Activated B cell treated with CpG ODN at 0.5 μM for 24 hours (primary cell): ENCODE measurements at regions of chr11 and their contacts with region 1.

Region 1: DNA sequence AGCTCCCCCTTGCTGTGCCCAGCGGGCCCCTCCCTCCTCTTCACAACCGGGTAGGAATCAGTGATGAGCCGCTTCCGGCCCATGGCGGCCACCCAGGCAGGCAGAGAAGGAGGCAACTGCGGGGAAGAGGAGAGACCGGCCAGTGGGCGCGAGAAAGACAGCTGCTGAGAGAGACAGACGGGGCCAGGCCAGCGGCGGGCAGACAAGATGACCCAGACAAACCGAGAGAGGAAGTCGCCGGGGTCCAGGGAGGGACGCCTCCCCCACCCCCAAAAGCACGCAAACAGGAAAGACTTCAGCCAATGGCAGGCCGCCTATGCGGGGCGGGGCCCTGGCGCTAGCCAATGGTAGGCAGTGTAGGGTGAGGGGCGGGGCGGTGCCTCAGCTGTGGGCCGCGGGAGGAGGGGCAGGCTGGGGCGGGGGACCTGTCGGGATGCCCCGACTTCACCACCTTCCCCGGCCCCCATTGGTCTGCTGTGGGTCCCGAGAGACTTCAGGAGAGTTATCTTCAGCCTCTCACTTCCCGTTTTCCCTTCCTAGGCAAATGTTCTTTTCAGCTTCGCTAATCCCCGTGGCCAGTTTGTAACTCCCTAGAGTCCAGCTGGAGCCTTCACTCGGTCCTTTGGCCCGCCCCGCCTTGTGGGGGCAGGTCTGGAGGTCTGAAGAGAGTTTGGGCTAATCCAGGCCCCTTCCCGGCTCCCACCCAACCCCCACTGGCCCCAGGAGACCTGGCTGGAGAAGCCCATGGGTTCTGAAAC is at the start of gene POLD4:
- DNase-seq: peak; percentile 98
- ATAC-seq: peak; percentile 78
- H3K4me3 Mint-ChIP-seq: peak within 1 kb of the TSS; percentile 95
- H3K27ac Mint-ChIP-seq: peak within 1 kb of the TSS; percentile 99
- H3K4me1 Mint-ChIP-seq: peaks cover 89% of the 10 kb centered on the region
- H3K27me3 Mint-ChIP-seq: no peaks in the 10 kb centered on the region
- CTCF ChIP-seq: no peak
- total RNA-seq, gene POLD4: 166 and 169 TPM in 2 replicates

Region 2: GRCh38 chr11:67265633-67266423 is 87.7 kb before region 1 on chr11:
- CTCF ChIA-PET with region 1: interaction called, 13 read pairs
- POLR2A ChIA-PET with region 1: interaction called, 63 read pairs
- intact Hi-C with region 1: loop called (anchors 1 kb)
- DNase-seq: peak; percentile 90
- ATAC-seq: peak; percentile 62
- H3K4me3 Mint-ChIP-seq: peak overlapping the region; percentile 77
- H3K27ac Mint-ChIP-seq: peak overlapping the region; percentile 84
- H3K4me1 Mint-ChIP-seq: peaks cover 67% of the 10 kb centered on the region
- H3K27me3 Mint-ChIP-seq: peaks cover 2% of the 10 kb centered on the region
- CTCF ChIP-seq: no peak

Region 3: GRCh38 chr11:67373925-67374618 is 20.6 kb after region 1 on chr11:
- CTCF ChIA-PET with region 1: interaction called, 735 read pairs
- POLR2A ChIA-PET with region 1: interaction called, 1,307 read pairs
- intact Hi-C with region 1: loop called (anchors 1 kb)
- DNase-seq: peak; percentile 63
- ATAC-seq: peak; percentile 47
- H3K4me3 Mint-ChIP-seq: peak overlapping the region; percentile 87
- H3K27ac Mint-ChIP-seq: peak overlapping the region; percentile 79
- H3K4me1 Mint-ChIP-seq: peaks cover 57% of the 10 kb centered on the region
- H3K27me3 Mint-ChIP-seq: no peaks in the 10 kb centered on the region
- CTCF ChIP-seq: no peak

Region 4: GRCh38 chr11:67409261-67409666 is 55.8 kb after region 1 on chr11:
- CTCF ChIA-PET with region 1: interaction called, 3 read pairs
- POLR2A ChIA-PET with region 1: interaction called, 99 read pairs
- intact Hi-C with region 1: no loop called
- DNase-seq: peak; percentile 61
- ATAC-seq: peak; percentile 63
- H3K4me3 Mint-ChIP-seq: peak overlapping the region; percentile 80
- H3K27ac Mint-ChIP-seq: peak overlapping the region; percentile 95
- H3K4me1 Mint-ChIP-seq: peaks cover 93% of the 10 kb centered on the region
- H3K27me3 Mint-ChIP-seq: no peaks in the 10 kb centered on the region
- CTCF ChIP-seq: no peak

Region 5: GRCh38 chr11:67468835-67469811 is 115.6 kb after region 1 on chr11 and contains the start of gene TMEM134:
- CTCF ChIA-PET with region 1: no interaction called
- POLR2A ChIA-PET with region 1: interaction called, 13 read pairs
- intact Hi-C with region 1: loop called (anchors 1 kb)
- DNase-seq: peak; percentile 88
- ATAC-seq: peak; percentile 73
- H3K4me3 Mint-ChIP-seq: peak within 1 kb of the TSS; percentile 89
- H3K27ac Mint-ChIP-seq: peak within 1 kb of the TSS; percentile 91
- H3K4me1 Mint-ChIP-seq: peaks cover 49% of the 10 kb centered on the region
- H3K27me3 Mint-ChIP-seq: no peaks in the 10 kb centered on the region
- CTCF ChIP-seq: no peak
- total RNA-seq, gene TMEM134: 76.0 and 83.5 TPM in 2 replicates

Region 6: GRCh38 chr11:67613960-67614715 is 260.6 kb after region 1 on chr11:
- CTCF ChIA-PET with region 1: interaction called, 3 read pairs
- POLR2A ChIA-PET with region 1: interaction called, 9 read pairs
- intact Hi-C with region 1: loop called (anchors 5 kb)
- DNase-seq: peak; percentile 81
- ATAC-seq: peak; percentile 95
- H3K4me3 Mint-ChIP-seq: peak overlapping the region; percentile 84
- H3K27ac Mint-ChIP-seq: peak overlapping the region; percentile 99
- H3K4me1 Mint-ChIP-seq: peaks cover 41% of the 10 kb centered on the region
- H3K27me3 Mint-ChIP-seq: no peaks in the 10 kb centered on the region
- CTCF ChIP-seq: no peak